GM12878 (cell line): ENCODE measurements at regions of chr22 and their contacts with region 1.

Region 1: GRCh38 chr22:26610072-26610958 is 7.5 kb downstream of the CRYBB1 start:
- DNase-seq: peak; percentile 93
- ATAC-seq: peak; percentile 94
- H3K4me3 ChIP-seq: peak overlapping the region; percentile 21; the same call in 1 of the 2 replicates
- H3K27ac ChIP-seq: peak overlapping the region; percentile 94
- H3K4me1 ChIP-seq: peaks cover 25% of the 10 kb centered on the region
- H3K27me3 ChIP-seq: no peaks in the 10 kb centered on the region
- CTCF ChIP-seq: no peak
- EP300 ChIP-seq: peak; percentile 99
- POLR2A ChIP-seq: no peak
- RAD21 ChIP-seq: no peak

Region 2: GRCh38 chr22:26589845-26590736 is 20.2 kb before region 1 on chr22 and contains the start of gene TPST2:
- CTCF ChIA-PET with region 1: interaction called, 8 read pairs
- POLR2A ChIA-PET with region 1: interaction called, 62 read pairs
- RAD21 ChIA-PET with region 1: interaction called, 7 read pairs
- SMC1A ChIA-PET with region 1: interaction called, 20 read pairs
- in situ Hi-C with region 1: no loop called
- intact Hi-C with region 1: loop called (anchors 2 kb)
- DNase-seq: no peak
- ATAC-seq: peak; percentile 81
- H3K4me3 ChIP-seq: peak within 1 kb of the TSS; percentile 89
- H3K27ac ChIP-seq: peak within 1 kb of the TSS; percentile 82
- H3K4me1 ChIP-seq: peaks cover 41% of the 10 kb centered on the region
- H3K27me3 ChIP-seq: no peaks in the 10 kb centered on the region
- CTCF ChIP-seq: no peak
- EP300 ChIP-seq: no peak
- POLR2A ChIP-seq: peak; percentile 85
- RAD21 ChIP-seq: 0 out of 2 replicates have a peak, but pooled peaks have one; percentile 2
- polyA plus RNA-seq, gene TPST2: 6.3 to 10.7 TPM